ENCODE measurements at regions of chr21 and their contacts with region 1.

Region 1: GRCh38 chr21:41283211-41283818 is 33.3 kb upstream of the FAM3B start:
- DNase-seq: peak; percentile 46
- H3K4me3 ChIP-seq: no peak overlapping the region
- H3K27me3 ChIP-seq: peaks cover 5% of the 10 kb centered on the region; the same call in 1 of the 2 replicates
- CTCF ChIP-seq: peak; percentile 76

Region 2: DNA sequence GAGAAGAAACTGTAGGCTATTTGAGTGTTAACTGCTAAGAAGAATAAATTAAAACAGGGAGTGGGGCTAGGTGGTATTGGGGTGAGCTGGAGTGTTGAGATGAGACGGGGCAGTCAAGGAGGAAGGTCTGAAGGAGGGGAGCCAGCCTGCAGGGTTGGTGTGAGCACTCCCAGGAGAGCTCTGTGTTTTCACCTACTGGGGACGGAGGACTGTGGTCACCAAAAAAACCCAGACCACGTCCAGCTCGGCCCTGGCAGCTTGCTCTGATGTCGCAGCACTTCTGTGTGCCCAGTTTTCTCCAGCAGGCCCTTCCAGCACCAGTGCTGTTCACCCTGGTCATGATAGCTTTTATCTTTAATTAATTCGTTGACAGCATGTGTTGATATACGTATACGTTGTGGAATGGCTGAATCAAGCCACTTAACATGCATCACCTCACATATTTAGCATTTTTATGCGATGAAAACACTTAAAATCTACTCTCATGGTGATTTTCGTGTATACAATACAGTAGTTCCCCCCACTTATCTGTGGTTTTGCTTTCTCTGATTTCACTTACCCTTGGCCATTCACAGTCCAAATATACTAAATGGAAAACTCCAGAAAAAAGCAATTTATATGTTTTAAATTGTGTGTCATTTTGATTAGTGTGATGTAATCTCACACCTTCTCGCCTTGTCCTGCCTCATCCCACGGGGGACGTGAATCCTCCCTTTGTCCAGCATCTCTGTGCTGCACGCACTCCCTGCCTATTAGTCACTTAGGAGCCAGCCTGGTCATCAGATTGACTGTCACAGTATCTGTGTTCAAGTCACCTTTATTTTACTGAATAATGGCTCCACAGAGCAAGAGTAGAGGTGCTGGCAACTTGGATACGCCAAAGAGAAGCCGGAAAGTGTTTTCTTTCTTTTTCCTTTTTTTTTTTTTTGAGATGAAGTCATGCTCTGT is 45.6 kb after region 1 on chr21:
- CTCF ChIA-PET with region 1: no interaction called
- POLR2A ChIA-PET with region 1: no interaction called
- DNase-seq: no peak
- H3K4me3 ChIP-seq: no peak overlapping the region
- H3K27me3 ChIP-seq: no peaks in the 10 kb centered on the region
- CTCF ChIP-seq: no peak

Region 3: GRCh38 chr21:41361786-41362604 is 78.7 kb after region 1 on chr21 and contains the start of gene MX2:
- CTCF ChIA-PET with region 1: interaction called, 16 read pairs
- POLR2A ChIA-PET with region 1: no interaction called
- DNase-seq: peak; percentile 74
- H3K4me3 ChIP-seq: peak within 1 kb of the TSS; percentile 37
- H3K27me3 ChIP-seq: peaks cover 8% of the 10 kb centered on the region
- CTCF ChIP-seq: no peak
- polyA plus RNA-seq, gene MX2: 4.1 and 5.1 TPM in 2 replicates

Region 4: GRCh38 chr21:41460578-41461527 is 177.5 kb after region 1 on chr21:
- CTCF ChIA-PET with region 1: interaction called, 99 read pairs
- POLR2A ChIA-PET with region 1: no interaction called
- DNase-seq: no peak
- H3K4me3 ChIP-seq: no peak overlapping the region
- H3K27me3 ChIP-seq: no peaks in the 10 kb centered on the region; the same call in 1 of the 2 replicates
- CTCF ChIP-seq: peak; percentile 92

Region 5: DNA sequence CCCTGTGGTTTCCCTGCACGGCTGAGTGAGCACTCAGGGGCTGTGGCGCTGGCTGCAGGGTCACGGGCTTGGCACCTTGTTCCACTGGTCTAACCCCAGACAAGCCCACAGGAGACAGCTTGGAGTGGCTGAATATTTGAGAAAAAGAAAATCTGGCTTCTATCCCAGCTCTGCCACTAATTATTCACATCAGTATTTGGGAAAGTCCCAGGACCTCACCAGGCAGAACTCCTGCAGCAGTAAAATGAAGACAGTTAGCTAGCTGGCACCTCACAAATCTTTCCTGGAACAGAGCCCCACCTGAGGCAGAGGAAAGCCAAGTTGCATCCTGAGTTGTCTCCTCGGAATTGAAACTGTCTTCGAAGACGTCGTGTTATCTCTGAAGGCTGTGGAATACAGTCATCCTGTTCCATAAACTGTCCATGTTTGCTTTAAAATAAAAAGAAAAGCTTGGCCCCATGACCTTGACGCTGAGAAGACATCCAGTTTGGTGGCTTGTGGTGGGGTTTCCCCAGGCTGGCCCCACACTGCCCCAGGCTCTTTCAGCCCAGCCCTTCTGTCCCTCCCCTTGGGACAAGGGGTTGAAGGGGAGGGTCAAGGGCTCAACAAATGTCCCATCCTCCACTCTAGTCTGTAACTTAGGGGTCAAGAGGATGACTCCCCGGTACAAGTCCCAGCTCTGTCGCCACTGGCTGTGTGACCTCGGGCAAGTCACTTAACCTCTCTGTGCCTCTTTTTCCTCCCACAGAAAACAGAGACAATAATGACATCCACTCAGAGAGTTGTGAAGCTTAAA is 318.5 kb after region 1 on chr21:
- CTCF ChIA-PET with region 1: interaction called, 10 read pairs
- POLR2A ChIA-PET with region 1: no interaction called
- DNase-seq: no peak
- H3K4me3 ChIP-seq: no peak overlapping the region
- H3K27me3 ChIP-seq: peaks cover 4% of the 10 kb centered on the region
- CTCF ChIP-seq: no peak

Region 6: GRCh38 chr21:41777951-41778874 is 494.9 kb after region 1 on chr21:
- CTCF ChIA-PET with region 1: interaction called, 10 read pairs
- POLR2A ChIA-PET with region 1: no interaction called
- DNase-seq: no peak
- H3K4me3 ChIP-seq: no peak overlapping the region
- H3K27me3 ChIP-seq: peaks cover 5% of the 10 kb centered on the region
- CTCF ChIP-seq: peak; percentile 98